ENCODE measurements at regions of chr13 and their contacts with region 1.

Region 1: DNA sequence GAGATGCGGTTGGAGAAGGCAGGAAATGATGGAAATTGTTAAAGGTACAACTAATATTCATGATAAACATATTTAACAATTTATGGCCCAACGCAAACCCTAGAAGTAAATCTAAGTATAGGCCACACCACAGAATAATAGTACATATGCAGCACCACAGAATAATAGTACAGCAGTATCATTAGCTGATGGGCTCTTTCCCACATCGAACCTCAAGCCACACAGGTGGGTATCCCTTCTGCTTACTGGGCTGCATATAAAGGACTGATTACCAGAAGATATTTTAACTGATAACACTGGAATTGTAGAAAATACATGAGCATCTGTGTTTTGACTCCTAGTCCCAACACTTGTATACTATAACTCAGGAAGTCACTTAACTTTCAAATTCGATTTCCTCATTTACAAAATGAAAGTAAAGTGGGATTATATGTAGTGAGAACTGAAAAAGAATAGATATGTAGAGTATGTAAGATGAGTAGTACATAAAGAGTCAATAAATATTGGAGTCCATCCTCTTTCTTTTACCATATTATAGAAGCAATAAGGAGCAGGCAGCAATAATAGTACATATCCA is 91.5 kb downstream of the TSC22D1 start:
- DNase-seq: no peak
- H3K4me3 ChIP-seq: no peak overlapping the region
- CTCF ChIP-seq: no peak

Region 2: DNA sequence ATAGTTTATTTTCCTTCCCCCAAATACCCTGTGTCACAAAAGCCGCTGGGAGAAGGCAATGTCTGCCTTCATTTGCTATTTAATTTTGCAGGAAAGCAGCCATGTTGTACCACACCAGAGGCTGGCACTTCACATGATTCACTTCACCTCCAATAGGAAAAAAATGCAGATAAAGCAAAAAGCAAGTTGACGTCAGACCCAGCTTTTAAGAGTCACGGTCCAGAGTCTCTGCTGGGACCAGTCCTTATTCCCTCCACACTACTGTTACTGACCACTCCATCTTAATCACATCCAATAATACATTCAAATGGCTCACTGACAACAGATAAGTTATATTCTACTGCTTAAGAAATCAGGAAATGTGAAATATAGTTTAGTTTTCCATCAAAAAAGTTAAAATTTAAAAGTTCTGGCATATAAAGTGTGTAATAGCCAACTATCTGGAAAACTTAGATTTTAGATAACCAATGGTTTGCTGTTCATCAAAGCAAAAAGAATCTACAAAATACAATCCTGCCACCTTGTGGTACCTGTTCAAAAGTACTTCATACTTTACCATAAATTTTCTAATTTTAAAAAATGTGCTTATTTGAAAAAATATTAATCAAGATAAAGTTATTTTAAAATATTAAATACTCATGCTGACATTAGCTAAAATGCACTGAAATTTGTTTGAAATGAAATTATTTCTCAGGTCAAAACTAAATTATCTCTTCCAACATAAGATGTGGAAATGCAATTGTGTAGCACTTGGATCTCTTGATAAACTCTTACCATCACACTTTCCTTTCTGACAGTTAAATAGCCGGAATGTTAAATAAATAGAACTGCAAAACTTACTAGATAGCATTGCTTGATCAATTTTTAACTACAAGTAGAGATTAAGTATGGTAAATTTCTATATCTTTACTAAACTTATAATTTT is 13.8 kb before region 1 on chr13:
- CTCF ChIA-PET with region 1: interaction called, 27 read pairs
- POLR2A ChIA-PET with region 1: interaction called, 4 read pairs
- DNase-seq: no peak
- H3K4me3 ChIP-seq: no peak overlapping the region
- CTCF ChIP-seq: no peak

Region 3: GRCh38 chr13:44508562-44509077 is 24.0 kb after region 1 on chr13:
- CTCF ChIA-PET with region 1: interaction called, 10 read pairs
- POLR2A ChIA-PET with region 1: no interaction called
- DNase-seq: no peak
- H3K4me3 ChIP-seq: no peak overlapping the region
- CTCF ChIP-seq: no peak

Region 4: GRCh38 chr13:44904967-44905366 is 420.3 kb after region 1 on chr13:
- CTCF ChIA-PET with region 1: interaction called, 12 read pairs
- POLR2A ChIA-PET with region 1: no interaction called
- DNase-seq: peak; percentile 83
- H3K4me3 ChIP-seq: no peak overlapping the region
- CTCF ChIP-seq: no peak

Region 5: GRCh38 chr13:44955406-44955805 is 470.8 kb after region 1 on chr13:
- CTCF ChIA-PET with region 1: interaction called, 29 read pairs
- POLR2A ChIA-PET with region 1: no interaction called
- DNase-seq: no peak
- H3K4me3 ChIP-seq: no peak overlapping the region
- CTCF ChIP-seq: no peak

Measured in AG04449 (cell line).